HepG2 (cell line): ENCODE measurements at regions of chr6 and their contacts with region 1.

Region 1: GRCh38 chr6:40999569-40999968 is 39.5 kb downstream of the UNC5CL start:
- DNase-seq: peak; percentile 80
- ATAC-seq: peak; percentile 82
- H3K4me3 ChIP-seq: no peak overlapping the region
- H3K27ac ChIP-seq: no peak overlapping the region
- H3K4me1 ChIP-seq: peaks cover 74% of the 10 kb centered on the region
- H3K27me3 ChIP-seq: no peaks in the 10 kb centered on the region
- CTCF ChIP-seq: peak; percentile 89
- EP300 ChIP-seq: peak in 1 of 2 experiments; percentile 6; a peak in 1 of 4 replicates
- POLR2A ChIP-seq: no peak
- RAD21 ChIP-seq: peak; percentile 46; the same call in 1 of the 2 replicates

Region 2: GRCh38 chr6:40719671-40720374 is 279.7 kb before region 1 on chr6:
- CTCF ChIA-PET with region 1: no interaction called
- POLR2A ChIA-PET with region 1: no interaction called
- in situ Hi-C with region 1: no loop called
- intact Hi-C with region 1: no loop called
- DNase-seq: no peak
- ATAC-seq: no peak
- H3K4me3 ChIP-seq: no peak overlapping the region
- H3K27ac ChIP-seq: no peak overlapping the region
- H3K4me1 ChIP-seq: peaks cover 25% of the 10 kb centered on the region
- H3K27me3 ChIP-seq: peaks cover 2 to 13% of the 10 kb centered on the region in 2 experiments; a peak in 2 of 5 replicates
- CTCF ChIP-seq: no peak
- EP300 ChIP-seq: no peak
- POLR2A ChIP-seq: no peak
- RAD21 ChIP-seq: no peak

Region 3: DNA sequence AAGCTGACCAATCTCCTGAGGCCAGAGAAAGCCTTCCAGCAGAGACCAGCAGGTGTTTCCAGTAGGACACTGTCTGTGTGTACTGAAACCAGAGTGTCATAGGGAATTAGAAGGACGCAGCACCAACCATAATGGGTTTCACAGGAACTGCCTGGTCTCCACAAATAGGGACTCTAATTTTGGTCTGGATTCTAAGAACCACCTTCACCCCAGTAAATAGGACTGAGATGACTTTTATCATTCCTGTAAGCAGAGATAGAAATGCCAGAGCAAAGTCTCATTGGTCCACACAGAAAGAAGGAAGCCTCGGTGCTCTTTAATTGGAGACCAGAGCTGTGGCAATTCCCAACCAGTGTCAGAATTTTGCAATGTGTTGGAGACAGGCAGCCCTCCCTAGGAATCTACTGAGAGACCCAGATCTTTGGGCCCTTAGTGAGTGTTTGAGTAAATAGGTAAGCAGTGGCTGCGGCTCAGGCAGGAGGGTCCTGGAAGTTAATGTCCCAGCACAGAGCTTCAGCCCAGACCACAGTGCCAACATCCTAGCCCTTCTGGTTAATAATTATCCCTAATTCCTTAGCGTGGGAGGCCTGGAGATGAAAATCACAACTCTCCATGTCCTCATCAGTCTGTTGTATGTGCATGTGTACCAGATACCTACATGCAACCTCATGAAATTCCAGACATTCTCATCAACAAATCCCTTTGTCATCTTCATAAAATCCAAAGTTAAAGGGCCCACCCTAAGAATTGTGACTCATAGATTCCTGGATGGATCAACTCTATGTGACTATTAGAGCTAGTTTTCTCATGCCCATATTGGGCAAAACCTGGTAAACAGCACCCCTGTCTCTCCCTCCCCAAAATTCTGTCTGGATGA is 41.7 kb before region 1 on chr6:
- CTCF ChIA-PET with region 1: no interaction called
- POLR2A ChIA-PET with region 1: interaction called, 26 read pairs
- in situ Hi-C with region 1: no loop called
- intact Hi-C with region 1: loop called (anchors 2 kb)
- DNase-seq: peak; percentile 88
- ATAC-seq: peak; percentile 84
- H3K4me3 ChIP-seq: peak overlapping the region in 1 of 3 experiments; percentile 4; a peak in 1 of 6 replicates
- H3K27ac ChIP-seq: no peak overlapping the region
- H3K4me1 ChIP-seq: peaks cover 82% of the 10 kb centered on the region
- H3K27me3 ChIP-seq: no peaks in the 10 kb centered on the region
- CTCF ChIP-seq: no peak
- EP300 ChIP-seq: peak in 1 of 2 experiments; percentile 2; a peak in 1 of 4 replicates
- POLR2A ChIP-seq: no peak
- RAD21 ChIP-seq: no peak